CD8-positive, alpha-beta T cell (primary cell): ENCODE measurements at regions of chr6 and their contacts with region 1.

Region 1: GRCh38 chr6:31158140-31158862 is at the start of gene TCF19:
- DNase-seq: peak; percentile 98 to 100 (median 99)
- ATAC-seq: peak; percentile 89
- H3K4me3 ChIP-seq: peak within 1 kb of the TSS; percentile 52 to 89
- H3K4me3 Mint-ChIP-seq: peak within 1 kb of the TSS; percentile 86
- H3K27ac ChIP-seq: peak within 1 kb of the TSS; percentile 40 to 82
- H3K27ac Mint-ChIP-seq: peak within 1 kb of the TSS; percentile 85
- H3K4me1 ChIP-seq: peaks cover 12% of the 10 kb centered on the region
- H3K4me1 Mint-ChIP-seq: peaks cover 24% of the 10 kb centered on the region
- H3K27me3 ChIP-seq: no peaks in the 10 kb centered on the region
- H3K27me3 Mint-ChIP-seq: no peaks in the 10 kb centered on the region
- CTCF ChIP-seq: no peak
- total RNA-seq, gene TCF19: 2.6 to 2.9 TPM

Region 2: GRCh38 chr6:31139599-31139998 is 18.7 kb before region 1 on chr6:
- CTCF ChIA-PET with region 1: interaction called, 5 read pairs
- POLR2A ChIA-PET with region 1: interaction called, 3 read pairs
- intact Hi-C with region 1: loop called in 1 of 2 experiments (anchors 2 kb)
- DNase-seq: no peak
- ATAC-seq: no peak
- H3K4me3 ChIP-seq: no peak overlapping the region
- H3K4me3 Mint-ChIP-seq: no peak overlapping the region
- H3K27ac ChIP-seq: no peak overlapping the region
- H3K27ac Mint-ChIP-seq: no peak overlapping the region
- H3K4me1 ChIP-seq: peaks cover 5% of the 10 kb centered on the region
- H3K4me1 Mint-ChIP-seq: peaks cover 4% of the 10 kb centered on the region
- H3K27me3 ChIP-seq: no peaks in the 10 kb centered on the region
- H3K27me3 Mint-ChIP-seq: no peaks in the 10 kb centered on the region
- CTCF ChIP-seq: no peak

Region 3: DNA sequence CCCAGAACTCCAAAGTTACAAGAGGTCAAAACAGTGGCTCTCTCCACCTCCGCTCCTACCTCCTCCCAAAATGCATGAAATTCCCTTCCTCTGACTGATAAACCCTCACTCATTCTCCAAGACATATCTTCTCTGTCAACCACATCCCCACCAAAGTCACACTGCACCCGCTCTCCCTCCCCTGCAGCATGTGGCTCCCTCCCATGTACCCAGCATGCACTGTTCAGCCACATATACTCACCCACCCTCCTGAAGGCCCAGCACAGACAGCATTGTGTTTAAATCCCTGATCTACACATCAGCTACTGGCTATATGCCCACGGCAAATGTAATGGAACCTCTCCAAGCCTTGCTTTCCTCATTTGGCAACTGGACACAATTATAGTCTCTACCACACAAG is 17.7 kb after region 1 on chr6:
- CTCF ChIA-PET with region 1: no interaction called
- POLR2A ChIA-PET with region 1: no interaction called
- intact Hi-C with region 1: no loop called
- DNase-seq: peak in 4 of 9 experiments; percentile 23 to 59 (median 34)
- ATAC-seq: peak; percentile 80
- H3K4me3 ChIP-seq: no peak overlapping the region
- H3K4me3 Mint-ChIP-seq: peak overlapping the region; percentile 44
- H3K27ac ChIP-seq: peak overlapping the region in 1 of 2 experiments; percentile 19
- H3K27ac Mint-ChIP-seq: peak overlapping the region; percentile 79
- H3K4me1 ChIP-seq: peaks cover 8% of the 10 kb centered on the region
- H3K4me1 Mint-ChIP-seq: peaks cover 22% of the 10 kb centered on the region
- H3K27me3 ChIP-seq: no peaks in the 10 kb centered on the region
- H3K27me3 Mint-ChIP-seq: no peaks in the 10 kb centered on the region
- CTCF ChIP-seq: no peak

Region 4: DNA sequence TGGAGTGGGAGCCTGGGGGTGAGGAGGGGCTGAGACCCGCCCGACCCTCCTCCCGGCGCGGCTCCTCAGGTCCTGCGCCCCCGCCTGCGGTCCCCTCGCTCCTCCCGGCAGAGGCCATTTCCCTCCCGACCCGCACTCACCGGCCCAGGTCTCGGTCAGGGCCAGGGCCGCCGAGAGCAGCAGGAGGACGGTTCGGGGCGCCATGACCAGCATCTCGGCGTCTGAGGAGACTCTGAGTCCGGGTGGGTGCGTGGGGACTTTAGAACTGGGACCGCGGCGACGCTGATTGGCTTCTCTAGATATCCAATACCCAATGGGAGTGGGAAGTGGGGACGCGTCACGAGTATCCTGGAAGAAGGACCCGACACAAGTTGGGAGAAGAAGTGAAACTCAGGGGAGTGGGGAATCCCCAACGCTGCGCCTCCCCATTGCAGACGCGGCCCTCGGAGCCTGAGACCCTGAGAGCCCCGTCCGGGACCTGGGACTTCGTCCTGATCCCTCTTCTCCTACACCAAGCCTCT is 198.7 kb after region 1 on chr6 and contains the start of gene HLA-B:
- CTCF ChIA-PET with region 1: no interaction called
- POLR2A ChIA-PET with region 1: interaction called, 4 read pairs
- intact Hi-C with region 1: loop called in 1 of 2 experiments (anchors 1 kb)
- DNase-seq: peak; percentile 65 to 98 (median 79)
- ATAC-seq: peak; percentile 80
- H3K4me3 ChIP-seq: peak within 1 kb of the TSS; percentile 55 to 92
- H3K4me3 Mint-ChIP-seq: peak within 1 kb of the TSS; percentile 100
- H3K27ac ChIP-seq: peak within 1 kb of the TSS; percentile 97 to 99
- H3K27ac Mint-ChIP-seq: peak within 1 kb of the TSS; percentile 100
- H3K4me1 ChIP-seq: peaks cover 48% of the 10 kb centered on the region
- H3K4me1 Mint-ChIP-seq: peaks cover 59% of the 10 kb centered on the region
- H3K27me3 ChIP-seq: no peaks in the 10 kb centered on the region
- H3K27me3 Mint-ChIP-seq: no peaks in the 10 kb centered on the region
- CTCF ChIP-seq: no peak
- total RNA-seq, gene HLA-B: 9,693 to 10,002 TPM

Region 5: DNA sequence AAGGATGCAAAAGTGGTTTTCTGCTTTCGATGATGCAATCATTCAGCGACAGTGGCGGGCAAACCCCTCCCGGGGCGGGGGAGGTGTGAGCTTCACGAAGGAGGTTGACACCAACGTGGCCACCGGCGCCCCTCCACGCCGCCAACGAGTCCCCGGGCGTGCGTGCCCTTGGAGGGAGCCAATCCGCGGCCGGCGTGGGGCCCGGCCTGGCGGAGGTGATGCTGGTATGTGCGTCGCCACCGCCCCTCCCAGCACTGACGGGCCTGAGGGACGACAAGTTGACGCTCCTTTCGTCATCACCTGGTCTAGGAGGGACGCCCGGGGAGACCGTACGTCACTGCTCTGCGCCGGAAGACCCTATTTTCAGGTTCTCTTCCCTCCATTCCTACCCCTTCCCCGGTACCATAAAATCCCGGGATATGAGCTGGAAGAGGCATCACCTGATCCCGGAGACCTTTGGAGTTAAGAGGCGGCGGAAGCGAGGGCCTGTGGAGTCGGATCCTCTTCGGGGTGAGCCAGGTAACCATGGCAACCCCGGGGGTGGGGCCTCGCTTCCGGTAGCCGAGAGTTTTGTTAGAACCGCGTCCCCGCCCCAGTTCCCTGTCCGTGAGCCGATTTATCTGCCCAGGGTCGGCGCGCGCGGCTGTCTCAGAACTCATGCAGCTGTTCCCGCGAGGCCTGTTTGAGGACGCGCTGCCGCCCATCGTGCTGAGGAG is 813.9 kb after region 1 on chr6 and contains the start of gene DXO:
- CTCF ChIA-PET with region 1: no interaction called
- POLR2A ChIA-PET with region 1: no interaction called
- intact Hi-C with region 1: loop called in 1 of 2 experiments (anchors 10 kb)
- DNase-seq: peak; percentile 91 to 100 (median 97)
- ATAC-seq: peak; percentile 93
- H3K4me3 ChIP-seq: peak within 1 kb of the TSS; percentile 66 to 90
- H3K4me3 Mint-ChIP-seq: peak within 1 kb of the TSS; percentile 96
- H3K27ac ChIP-seq: peak within 1 kb of the TSS; percentile 98 to 99
- H3K27ac Mint-ChIP-seq: peak within 1 kb of the TSS; percentile 100
- H3K4me1 ChIP-seq: peaks cover 22% of the 10 kb centered on the region
- H3K4me1 Mint-ChIP-seq: peaks cover 37% of the 10 kb centered on the region
- H3K27me3 ChIP-seq: no peaks in the 10 kb centered on the region
- H3K27me3 Mint-ChIP-seq: no peaks in the 10 kb centered on the region
- CTCF ChIP-seq: no peak
- total RNA-seq, gene DXO: 20.8 to 22.2 TPM